PC-3 (cell line): ENCODE measurements at regions of chr22 and their contacts with region 1.

Region 1: DNA sequence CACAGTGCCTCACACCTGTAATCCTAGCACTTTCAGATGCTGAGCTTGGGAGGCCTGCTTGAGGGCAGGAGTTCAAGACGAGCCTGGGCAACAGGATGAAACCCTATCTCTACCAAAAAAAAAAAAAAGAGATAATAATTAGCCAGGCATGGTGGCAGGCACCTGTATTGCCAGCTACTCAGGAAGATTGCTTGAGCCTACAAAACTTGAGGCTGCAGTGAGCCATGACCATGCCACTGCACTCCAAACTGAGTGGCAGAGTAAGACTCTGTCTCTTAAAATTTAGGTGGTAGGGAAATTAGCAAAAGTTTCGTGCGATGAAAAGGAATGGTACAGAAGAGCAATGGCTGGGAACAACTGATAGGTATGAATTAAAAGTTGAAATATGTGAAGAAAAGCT is 18.0 kb downstream of the ST13 start:
- DNase-seq: no peak
- ATAC-seq: no peak
- H3K4me3 ChIP-seq: no peak overlapping the region
- H3K27ac ChIP-seq: no peak overlapping the region
- H3K4me1 ChIP-seq: peaks cover 26% of the 10 kb centered on the region
- H3K27me3 ChIP-seq: no peaks in the 10 kb centered on the region
- CTCF ChIP-seq: no peak

Region 2: GRCh38 chr22:40263191-40263590 is 575.3 kb before region 1 on chr22:
- CTCF ChIA-PET with region 1: no interaction called
- POLR2A ChIA-PET with region 1: no interaction called
- intact Hi-C with region 1: no loop called
- DNase-seq: no peak
- ATAC-seq: no peak
- H3K4me3 ChIP-seq: no peak overlapping the region
- H3K27ac ChIP-seq: no peak overlapping the region
- H3K4me1 ChIP-seq: peaks cover 13% of the 10 kb centered on the region
- H3K27me3 ChIP-seq: no peaks in the 10 kb centered on the region
- CTCF ChIP-seq: no peak

Region 3: DNA sequence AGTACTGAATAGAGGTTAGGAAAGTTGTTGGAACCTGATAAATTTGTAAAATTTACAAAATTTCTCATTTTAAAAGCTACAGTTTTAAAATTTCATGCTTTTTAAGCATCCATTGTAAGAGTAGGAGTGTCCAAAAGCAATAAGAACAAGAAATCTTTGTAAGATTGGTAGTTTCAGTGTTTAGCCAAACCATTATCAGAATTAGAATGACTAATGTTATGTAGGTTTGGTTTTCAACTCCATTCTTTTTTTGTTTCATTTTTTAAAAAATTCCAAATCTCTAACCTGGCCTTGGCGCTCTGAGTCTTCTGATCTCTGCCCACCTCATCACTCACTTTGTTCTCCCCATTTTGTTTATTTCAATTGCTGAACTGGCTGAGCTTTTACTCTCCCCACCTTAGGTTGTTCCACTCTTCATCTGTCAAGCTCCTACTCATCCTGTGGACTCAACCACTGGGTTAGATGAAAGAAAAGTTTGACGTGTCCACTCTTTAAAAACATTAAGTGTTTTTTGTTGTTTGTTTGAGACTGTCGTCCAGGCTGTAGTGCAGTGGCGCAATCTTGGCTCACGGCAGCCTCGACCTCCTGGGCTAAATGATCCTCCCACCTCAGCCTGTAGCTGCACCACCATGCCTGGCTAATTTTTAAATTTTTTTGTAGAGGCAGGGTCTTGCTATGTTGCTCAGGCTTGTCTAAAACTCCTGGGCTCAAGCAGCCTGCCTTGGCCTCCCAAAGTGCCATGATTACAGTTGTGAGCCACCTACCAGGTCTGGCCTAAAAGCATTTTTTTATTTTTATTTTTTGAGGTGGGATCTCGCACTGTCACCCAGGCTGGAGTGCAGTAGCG is 267.9 kb after region 1 on chr22:
- CTCF ChIA-PET with region 1: interaction called, 10 read pairs
- POLR2A ChIA-PET with region 1: no interaction called
- intact Hi-C with region 1: no loop called
- DNase-seq: no peak
- ATAC-seq: no peak
- H3K4me3 ChIP-seq: no peak overlapping the region
- H3K27ac ChIP-seq: no peak overlapping the region
- H3K4me1 ChIP-seq: no peaks in the 10 kb centered on the region
- H3K27me3 ChIP-seq: no peaks in the 10 kb centered on the region
- CTCF ChIP-seq: no peak